ENCODE measurements at regions of chrX and their contacts with region 1.

Region 1: DNA sequence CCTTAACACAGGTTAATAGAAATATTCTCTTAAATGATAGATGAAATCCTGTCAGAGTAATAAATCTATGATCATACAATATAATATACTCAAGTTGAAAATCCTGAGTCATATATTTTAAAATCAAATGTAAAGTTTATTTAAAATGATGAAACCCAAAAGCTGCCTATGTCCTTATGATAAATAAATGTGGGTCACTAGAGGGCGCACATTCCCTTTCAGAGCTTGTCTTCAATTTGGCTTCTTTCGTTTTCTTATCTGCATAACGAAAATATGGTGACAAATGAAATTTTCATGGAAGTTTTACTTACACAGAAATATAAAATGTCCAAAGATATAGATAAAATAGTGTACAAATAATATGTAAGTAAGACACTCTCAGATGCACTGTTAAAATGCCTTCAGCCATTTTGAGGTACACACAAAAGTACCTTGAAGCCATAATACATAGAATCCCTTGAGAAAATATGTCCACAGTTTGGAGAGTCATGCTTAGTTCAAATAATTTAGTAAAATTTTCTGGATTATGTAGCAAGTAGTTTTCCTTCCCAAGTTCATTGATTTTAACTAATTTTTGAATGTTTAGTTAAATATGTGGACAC is 680.4 kb downstream of the DMD start:
- DNase-seq: peak; percentile 50
- H3K4me3 ChIP-seq: no peak overlapping the region
- H3K27ac ChIP-seq: no peak overlapping the region
- H3K4me1 ChIP-seq: no peaks in the 10 kb centered on the region
- H3K27me3 ChIP-seq: no peaks in the 10 kb centered on the region
- CTCF ChIP-seq: peak; percentile 24 to 27
- POLR2A ChIP-seq: no peak

Region 2: GRCh38 chrX:32673193-32673592 is 142.3 kb after region 1 on chrX:
- CTCF ChIA-PET with region 1: interaction called, 4 read pairs
- POLR2A ChIA-PET with region 1: no interaction called
- dilution Hi-C with region 1: no loop called
- intact Hi-C with region 1: loop called (anchors 5 kb)
- DNase-seq: peak; percentile 0
- H3K4me3 ChIP-seq: no peak overlapping the region
- H3K27ac ChIP-seq: no peak overlapping the region
- H3K4me1 ChIP-seq: no peaks in the 10 kb centered on the region
- H3K27me3 ChIP-seq: no peaks in the 10 kb centered on the region
- CTCF ChIP-seq: no peak
- POLR2A ChIP-seq: no peak

Region 3: DNA sequence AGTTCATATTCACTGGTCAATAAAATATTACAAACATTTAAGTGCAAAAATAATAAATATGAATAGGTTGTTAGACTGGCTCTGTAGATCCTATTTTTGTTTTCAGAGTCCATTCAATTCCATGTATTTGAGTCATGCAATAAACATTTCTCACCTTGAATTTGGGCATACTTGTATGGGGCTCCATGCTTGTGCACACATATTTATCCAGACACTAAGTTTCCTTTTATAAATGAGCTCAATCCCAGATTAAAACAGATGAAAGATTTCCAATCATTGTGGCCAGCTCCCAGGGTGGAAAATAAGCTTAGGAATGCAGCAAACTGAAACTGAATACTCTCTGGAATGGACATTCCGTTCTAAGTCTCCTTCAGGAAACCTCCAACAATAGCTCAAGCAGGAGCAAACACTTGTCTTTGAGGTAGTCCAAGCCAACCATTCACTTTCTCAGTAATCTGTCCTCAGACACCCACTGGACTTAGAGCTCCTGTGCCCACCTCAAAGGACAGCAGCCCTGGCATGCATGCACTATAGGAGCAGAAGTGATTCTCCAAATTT is 664.1 kb after region 1 on chrX:
- CTCF ChIA-PET with region 1: no interaction called
- POLR2A ChIA-PET with region 1: no interaction called
- dilution Hi-C with region 1: no loop called
- intact Hi-C with region 1: loop called (anchors 5 kb)
- DNase-seq: peak; percentile 62
- H3K4me3 ChIP-seq: no peak overlapping the region
- H3K27ac ChIP-seq: peak overlapping the region; percentile 83
- H3K4me1 ChIP-seq: no peaks in the 10 kb centered on the region
- H3K27me3 ChIP-seq: no peaks in the 10 kb centered on the region
- CTCF ChIP-seq: no peak
- POLR2A ChIP-seq: no peak

Region 4: GRCh38 chrX:33336783-33337182 is 805.9 kb after region 1 on chrX:
- CTCF ChIA-PET with region 1: interaction called, 77 read pairs
- POLR2A ChIA-PET with region 1: no interaction called
- dilution Hi-C with region 1: no loop called
- intact Hi-C with region 1: loop called (anchors 1 kb)
- DNase-seq: peak; percentile 38
- H3K4me3 ChIP-seq: no peak overlapping the region
- H3K27ac ChIP-seq: no peak overlapping the region
- H3K4me1 ChIP-seq: no peaks in the 10 kb centered on the region
- H3K27me3 ChIP-seq: no peaks in the 10 kb centered on the region
- CTCF ChIP-seq: peak in 1 of 2 donors; percentile 36
- POLR2A ChIP-seq: no peak

Measured in endothelial cell of umbilical vein (primary cell).